Heart left ventricle (tissue), 16 donors: ENCODE measurements at regions of chr7 and their contacts with region 1.

Region 1: GRCh38 chr7:54292171-54292925 is 249.8 kb upstream of the VSTM2A start:
- DNase-seq: no peak
- ATAC-seq: no peak
- H3K4me3 ChIP-seq: no peak overlapping the region
- H3K27ac ChIP-seq: no peak overlapping the region
- H3K4me1 ChIP-seq: no peaks in the 10 kb centered on the region
- H3K27me3 ChIP-seq: no peaks in the 10 kb centered on the region
- CTCF ChIP-seq: no peak
- POLR2A ChIP-seq: no peak

Region 2: GRCh38 chr7:54215424-54215823 is 76.9 kb before region 1 on chr7:
- intact Hi-C with region 1: loop called in 1 of 10 experiments (anchors 10 kb)
- DNase-seq: no peak
- ATAC-seq: no peak
- H3K4me3 ChIP-seq: no peak overlapping the region
- H3K27ac ChIP-seq: no peak overlapping the region
- H3K4me1 ChIP-seq: no peaks in the 10 kb centered on the region
- H3K27me3 ChIP-seq: no peaks in the 10 kb centered on the region
- CTCF ChIP-seq: no peak
- POLR2A ChIP-seq: no peak